ENCODE measurements at regions of chr4 and their contacts with region 1.

Region 1: GRCh38 chr4:132269303-132269990 is 879.6 kb upstream of the PCDH10 start:
- DNase-seq: no peak
- ATAC-seq: no peak
- H3K4me3 ChIP-seq: no peak overlapping the region
- H3K27ac ChIP-seq: no peak overlapping the region
- H3K4me1 ChIP-seq: no peaks in the 10 kb centered on the region
- H3K27me3 ChIP-seq: no peaks in the 10 kb centered on the region

Region 2: DNA sequence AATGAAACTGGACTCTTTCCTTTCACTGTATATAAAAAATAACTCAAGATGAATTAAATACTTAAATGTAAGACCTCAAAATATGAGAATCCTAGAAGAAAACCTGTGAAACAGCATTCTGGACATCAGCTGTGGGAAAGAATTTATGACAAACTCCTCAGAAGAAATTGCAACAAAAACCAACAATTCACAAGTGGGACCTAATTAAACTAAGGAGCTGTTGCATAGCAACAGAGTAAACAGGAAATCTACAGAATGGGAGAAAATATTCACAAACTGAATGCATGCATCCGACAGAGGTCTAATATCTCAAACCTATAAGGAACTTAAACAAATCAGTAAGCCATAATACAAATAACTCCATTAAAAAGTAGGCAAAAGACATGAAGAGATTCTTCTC is 27.9 kb after region 1 on chr4:
- intact Hi-C with region 1: loop called in 1 of 2 experiments (anchors 1 kb)
- DNase-seq: no peak
- ATAC-seq: no peak
- H3K4me3 ChIP-seq: no peak overlapping the region
- H3K27ac ChIP-seq: no peak overlapping the region
- H3K4me1 ChIP-seq: no peaks in the 10 kb centered on the region
- H3K27me3 ChIP-seq: no peaks in the 10 kb centered on the region